Brain microvascular endothelial cell (primary cell): ENCODE measurements at regions of chr2 and their contacts with region 1.

Region 1: DNA sequence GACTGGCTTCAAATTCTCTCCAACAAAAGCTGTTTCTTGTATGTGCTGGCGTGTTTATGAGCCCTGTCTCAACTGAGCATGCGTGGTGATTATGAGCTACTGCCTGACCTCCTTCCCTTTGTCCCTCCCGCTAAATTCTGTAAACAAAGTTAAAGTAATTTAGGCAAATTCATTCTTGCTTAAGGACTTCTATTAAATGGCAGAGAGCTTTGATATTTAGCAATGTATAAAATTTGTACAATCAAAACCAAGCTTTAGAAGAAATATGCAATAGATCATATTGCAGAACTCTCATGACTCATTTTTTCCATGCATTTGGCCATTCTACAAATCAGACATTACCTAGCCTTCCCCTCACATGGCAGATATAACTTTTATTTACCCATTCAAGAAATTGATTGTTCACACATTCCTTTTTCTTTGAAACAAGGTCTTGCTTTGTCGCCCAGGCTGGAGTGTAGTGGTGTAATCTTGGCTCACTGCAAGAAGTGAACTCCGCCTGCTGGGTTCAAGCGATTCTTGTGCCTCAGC is 18.2 kb downstream of the IGFBP2 start:
- DNase-seq: no peak
- H3K4me3 ChIP-seq: no peak overlapping the region
- H3K27ac ChIP-seq: no peak overlapping the region
- H3K27me3 ChIP-seq: no peaks in the 10 kb centered on the region
- CTCF ChIP-seq: no peak

Region 2: DNA sequence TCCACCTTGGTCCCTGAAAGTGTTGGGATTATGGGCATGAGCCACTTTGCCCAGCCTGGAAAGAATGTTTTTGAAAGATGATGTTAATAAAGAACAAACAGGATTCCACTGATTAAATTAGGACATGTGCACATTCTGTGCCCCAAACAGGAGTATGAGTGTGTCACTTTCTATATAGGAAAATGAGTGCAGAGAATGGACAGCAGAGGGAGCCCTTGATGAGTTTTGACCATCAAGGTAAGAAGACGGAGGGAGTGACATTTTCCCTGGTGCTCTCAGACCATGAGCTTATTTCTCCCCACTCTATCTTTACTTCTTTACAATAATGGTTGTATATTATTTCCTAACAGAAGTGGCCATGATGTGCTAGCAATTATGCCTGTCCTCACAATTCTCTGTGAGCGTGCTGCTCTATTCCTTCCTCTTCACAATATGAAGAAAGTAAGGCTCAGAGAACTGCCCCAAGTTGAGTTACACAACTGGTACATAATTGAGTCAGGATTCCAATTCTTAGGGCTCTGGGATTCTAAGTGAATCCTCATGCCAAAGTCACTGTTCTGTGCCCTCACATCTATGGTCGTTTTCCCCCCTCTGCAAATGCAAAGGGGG is 132.2 kb before region 1 on chr2:
- in situ Hi-C with region 1: loop called (anchors 10 kb)
- DNase-seq: peak; percentile 90
- H3K4me3 ChIP-seq: no peak overlapping the region
- H3K27ac ChIP-seq: no peak overlapping the region
- H3K27me3 ChIP-seq: no peaks in the 10 kb centered on the region
- CTCF ChIP-seq: peak; percentile 76

Region 3: GRCh38 chr2:217064234-217065024 is 413.0 kb after region 1 on chr2:
- in situ Hi-C with region 1: no loop called
- DNase-seq: peak; percentile 49
- H3K4me3 ChIP-seq: no peak overlapping the region
- H3K27ac ChIP-seq: peak overlapping the region; percentile 41
- H3K27me3 ChIP-seq: no peaks in the 10 kb centered on the region
- CTCF ChIP-seq: no peak

Region 4: DNA sequence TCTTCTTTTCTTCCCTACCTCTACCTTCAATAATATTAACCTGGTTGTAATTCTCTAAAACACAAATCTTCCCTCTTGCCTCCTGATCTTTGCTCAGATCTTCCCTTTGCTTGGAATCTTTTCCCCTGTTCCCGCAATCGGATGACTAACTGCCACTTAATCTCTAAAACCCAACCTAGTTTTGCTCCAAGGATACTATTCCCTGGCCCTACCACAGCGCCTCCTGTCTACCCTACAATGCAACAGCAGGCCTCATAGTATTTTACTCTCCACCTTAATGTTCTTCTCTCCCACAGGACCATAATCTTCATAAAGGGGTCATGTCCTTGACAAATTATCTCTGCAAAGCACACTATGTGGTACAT is 455.2 kb after region 1 on chr2:
- in situ Hi-C with region 1: no loop called
- DNase-seq: peak; percentile 25
- H3K4me3 ChIP-seq: no peak overlapping the region
- H3K27ac ChIP-seq: peak overlapping the region; percentile 67
- H3K27me3 ChIP-seq: no peaks in the 10 kb centered on the region
- CTCF ChIP-seq: peak; percentile 84